Activated B cell treated with CpG ODN at 0.5 μM for 24 hours (primary cell): ENCODE measurements at regions of chr22 and their contacts with region 1.

Region 1: GRCh38 chr22:41666661-41667258 is 21.9 kb downstream of the SNU13 start:
- DNase-seq: peak; percentile 94
- ATAC-seq: peak; percentile 95
- H3K4me3 Mint-ChIP-seq: peak overlapping the region; percentile 84
- H3K27ac Mint-ChIP-seq: peak overlapping the region; percentile 92
- H3K4me1 Mint-ChIP-seq: peaks cover 5% of the 10 kb centered on the region
- H3K27me3 Mint-ChIP-seq: no peaks in the 10 kb centered on the region
- CTCF ChIP-seq: peak; percentile 74

Region 2: DNA sequence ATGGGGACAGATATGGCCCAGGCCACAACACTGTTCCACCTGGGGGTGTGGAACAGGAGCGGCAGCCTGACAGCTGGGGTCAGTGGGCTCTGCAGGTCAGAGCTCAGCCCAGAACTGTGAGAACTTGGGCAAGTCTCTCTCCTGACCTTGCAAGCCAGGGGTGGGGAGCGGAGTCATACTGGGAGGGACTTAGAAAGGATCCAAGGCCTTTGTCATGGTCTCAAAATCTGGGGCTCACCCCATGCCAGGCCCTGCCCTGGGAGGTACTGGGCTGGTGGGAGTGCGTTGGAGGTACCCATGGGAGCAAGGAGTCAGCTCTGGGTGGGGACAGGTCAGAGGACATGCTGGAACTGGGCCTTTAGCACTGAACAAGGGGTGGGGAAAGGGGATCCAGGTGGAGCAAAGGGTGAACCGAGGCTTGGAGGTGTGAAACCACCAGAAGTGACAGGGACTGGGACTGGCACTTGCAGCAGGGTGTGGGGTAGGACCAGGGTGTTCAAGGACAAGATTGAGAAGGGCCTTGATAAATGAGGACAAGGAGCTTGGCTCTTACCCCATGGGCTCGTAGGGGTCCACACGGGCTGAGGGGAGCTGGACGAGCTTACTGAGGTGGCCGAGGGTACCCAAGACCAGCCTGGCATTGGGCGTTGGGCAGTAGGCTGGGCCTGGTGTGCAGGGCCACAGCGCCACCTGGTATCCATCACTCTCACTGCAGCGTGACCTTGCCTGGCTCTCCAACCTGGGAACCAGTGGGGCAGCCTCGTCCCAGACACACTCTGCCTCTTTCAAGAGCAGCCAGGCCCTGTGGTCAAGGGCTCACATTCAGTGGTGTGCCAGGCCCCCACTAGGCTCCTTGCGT is 69.8 kb before region 1 on chr22:
- CTCF ChIA-PET with region 1: no interaction called
- POLR2A ChIA-PET with region 1: no interaction called
- intact Hi-C with region 1: no loop called
- DNase-seq: no peak
- ATAC-seq: peak; percentile 67
- H3K4me3 Mint-ChIP-seq: no peak overlapping the region
- H3K27ac Mint-ChIP-seq: no peak overlapping the region
- H3K4me1 Mint-ChIP-seq: no peaks in the 10 kb centered on the region
- H3K27me3 Mint-ChIP-seq: no peaks in the 10 kb centered on the region
- CTCF ChIP-seq: no peak

Region 3: DNA sequence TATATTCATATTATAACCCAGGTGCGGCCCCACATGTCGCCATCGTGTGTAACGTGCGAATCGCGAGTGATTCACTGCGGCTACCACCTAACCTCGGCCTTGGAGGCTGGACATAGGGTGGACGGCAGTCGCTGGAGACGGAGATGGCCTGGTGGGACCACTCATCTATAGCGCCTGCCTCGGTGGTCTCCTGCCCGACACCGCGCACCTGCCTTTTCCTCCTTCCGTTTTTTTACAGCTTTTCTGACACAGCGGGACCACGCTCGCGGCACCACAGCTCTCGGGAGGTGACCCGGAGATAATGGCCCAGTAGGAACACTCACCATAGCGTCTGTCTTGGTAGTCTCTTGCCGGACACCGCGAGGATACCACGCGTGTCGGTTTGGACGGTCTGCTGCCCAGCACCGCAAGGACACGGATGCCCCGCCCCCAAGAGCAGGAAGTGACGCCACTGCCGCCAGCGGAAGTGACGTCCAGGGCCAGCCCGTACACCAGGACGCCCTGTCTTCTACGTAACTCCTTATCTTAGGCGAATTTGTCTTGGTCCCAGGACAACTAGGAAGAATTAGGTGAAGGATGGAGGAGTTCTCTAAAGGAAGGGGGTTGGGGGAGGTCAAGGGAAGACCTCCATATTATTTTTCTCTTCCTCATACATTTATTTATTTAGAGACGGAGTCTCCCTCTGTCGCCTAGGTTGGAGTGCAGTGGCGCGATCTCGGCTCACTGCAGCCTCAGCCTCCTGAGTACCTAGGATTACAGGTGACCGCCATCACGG is 15.5 kb after region 1 on chr22:
- CTCF ChIA-PET with region 1: interaction called, 8 read pairs
- POLR2A ChIA-PET with region 1: interaction called, 19 read pairs
- intact Hi-C with region 1: no loop called
- DNase-seq: peak; percentile 87
- ATAC-seq: peak; percentile 87
- H3K4me3 Mint-ChIP-seq: peak overlapping the region; percentile 94
- H3K27ac Mint-ChIP-seq: peak overlapping the region; percentile 95
- H3K4me1 Mint-ChIP-seq: peaks cover 21% of the 10 kb centered on the region
- H3K27me3 Mint-ChIP-seq: no peaks in the 10 kb centered on the region
- CTCF ChIP-seq: no peak

Region 4: DNA sequence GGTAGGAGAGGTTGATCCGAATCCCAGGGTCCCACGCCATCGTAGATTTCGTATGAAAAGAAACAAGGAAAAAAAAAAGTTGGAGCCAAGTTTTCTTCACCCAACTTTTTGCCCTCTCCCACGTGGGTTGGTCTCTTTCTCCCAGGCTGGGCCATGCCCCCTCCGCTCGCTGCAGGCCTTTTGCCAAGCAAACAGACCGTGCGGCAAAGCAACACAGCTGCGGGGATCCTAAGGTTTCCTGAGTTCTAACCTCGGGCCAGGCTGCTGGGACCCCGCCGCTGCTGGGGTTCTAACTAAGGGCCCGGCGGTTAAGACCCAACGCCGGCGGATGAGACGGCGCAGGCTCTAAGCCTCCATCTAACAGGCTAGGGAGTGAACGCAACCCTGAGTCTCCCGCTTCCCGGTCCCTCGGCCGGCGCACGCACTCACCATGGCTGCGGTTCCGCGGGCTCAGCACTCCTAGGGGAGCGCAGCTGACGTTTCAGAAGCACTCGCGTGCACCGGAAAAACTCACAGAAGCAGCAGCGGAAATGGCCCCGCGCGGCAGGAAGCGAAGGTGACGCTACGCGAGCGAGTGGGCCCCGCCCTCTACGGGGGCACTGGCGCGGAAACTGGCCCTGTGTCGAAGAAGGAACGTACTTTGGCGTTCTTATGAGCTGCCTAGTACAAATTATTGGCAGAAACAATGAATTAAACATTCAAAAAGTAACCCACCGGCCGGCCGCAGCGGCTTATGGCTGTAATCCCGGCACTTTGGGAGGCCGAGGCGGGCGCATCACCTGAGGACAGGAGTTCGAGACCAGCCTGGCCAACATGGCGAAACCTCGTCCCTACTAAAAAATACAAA is 21.8 kb after region 1 on chr22 and contains the start of gene SNU13:
- CTCF ChIA-PET with region 1: interaction called, 8 read pairs
- POLR2A ChIA-PET with region 1: interaction called, 19 read pairs
- intact Hi-C with region 1: loop called (anchors 1 kb)
- DNase-seq: peak; percentile 88
- ATAC-seq: peak; percentile 94
- H3K4me3 Mint-ChIP-seq: peak within 1 kb of the TSS; percentile 97
- H3K27ac Mint-ChIP-seq: peak within 1 kb of the TSS; percentile 96
- H3K4me1 Mint-ChIP-seq: peaks cover 28% of the 10 kb centered on the region
- H3K27me3 Mint-ChIP-seq: no peaks in the 10 kb centered on the region
- CTCF ChIP-seq: no peak
- total RNA-seq, gene SNU13: 157 and 165 TPM in 2 replicates